Natural killer cell (primary cell): ENCODE measurements at regions of chrX and their contacts with region 1.

Region 1: DNA sequence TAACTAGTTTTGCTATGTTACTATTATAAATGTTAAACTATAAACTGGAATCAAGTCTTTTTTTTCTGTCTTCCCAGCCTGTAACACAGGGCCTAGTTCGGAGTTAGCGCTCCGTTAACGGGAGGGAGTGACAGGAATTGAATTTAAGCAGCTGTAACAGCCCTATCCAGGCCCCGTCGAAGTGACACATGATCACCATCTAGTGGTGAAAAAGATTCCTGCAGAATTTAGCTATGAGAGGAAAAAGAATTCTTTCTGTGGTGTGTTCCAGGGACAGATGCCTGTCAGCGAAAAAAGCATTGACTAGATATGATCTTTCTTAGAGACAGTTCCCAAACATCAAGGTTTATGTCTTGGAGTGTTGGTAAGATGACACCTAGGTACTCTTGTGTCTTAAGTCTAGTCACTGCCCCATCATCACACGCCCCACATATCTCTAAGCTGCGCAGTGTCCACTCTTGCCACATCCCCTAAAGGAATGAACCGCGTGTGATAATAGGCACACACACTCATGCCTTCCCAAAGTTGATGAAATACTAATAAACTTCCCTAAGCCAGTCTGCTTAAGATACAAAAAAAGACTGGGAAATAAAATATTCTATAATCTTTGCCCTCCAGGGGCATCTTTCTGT is 2.0 kb downstream of the GAB3 start:
- DNase-seq: peak in 1 of 2 donors; percentile 85
- ATAC-seq: peak; percentile 63 to 80 (median 65)
- H3K4me3 ChIP-seq: peak overlapping the region; percentile 83
- H3K4me3 Mint-ChIP-seq: peak overlapping the region; percentile 89
- H3K27ac ChIP-seq: peak overlapping the region; percentile 41
- H3K27ac Mint-ChIP-seq: peak overlapping the region; percentile 78 to 84
- H3K4me1 ChIP-seq: peaks cover 26% of the 10 kb centered on the region
- H3K4me1 Mint-ChIP-seq: peaks cover 30 to 43% of the 10 kb centered on the region in 2 donors
- H3K27me3 ChIP-seq: no peaks in the 10 kb centered on the region
- H3K27me3 Mint-ChIP-seq: peaks cover 0 to 7% of the 10 kb centered on the region in 2 donors
- CTCF ChIP-seq: peak; percentile 69

Region 2: GRCh38 chrX:154458954-154459778 is 289.7 kb before region 1 on chrX:
- intact Hi-C with region 1: no loop called
- DNase-seq: peak in 1 of 2 donors; percentile 38
- ATAC-seq: peak in 1 of 3 donors; percentile 53
- H3K4me3 ChIP-seq: peak overlapping the region; percentile 44
- H3K4me3 Mint-ChIP-seq: peak overlapping the region; percentile 79
- H3K27ac ChIP-seq: no peak overlapping the region
- H3K27ac Mint-ChIP-seq: peak overlapping the region in 1 of 2 donors; percentile 18
- H3K4me1 ChIP-seq: peaks cover 21% of the 10 kb centered on the region
- H3K4me1 Mint-ChIP-seq: peaks cover 6 to 18% of the 10 kb centered on the region in 2 donors
- H3K27me3 ChIP-seq: no peaks in the 10 kb centered on the region
- H3K27me3 Mint-ChIP-seq: peaks cover 0 to 7% of the 10 kb centered on the region in 2 donors
- CTCF ChIP-seq: no peak

Region 3: DNA sequence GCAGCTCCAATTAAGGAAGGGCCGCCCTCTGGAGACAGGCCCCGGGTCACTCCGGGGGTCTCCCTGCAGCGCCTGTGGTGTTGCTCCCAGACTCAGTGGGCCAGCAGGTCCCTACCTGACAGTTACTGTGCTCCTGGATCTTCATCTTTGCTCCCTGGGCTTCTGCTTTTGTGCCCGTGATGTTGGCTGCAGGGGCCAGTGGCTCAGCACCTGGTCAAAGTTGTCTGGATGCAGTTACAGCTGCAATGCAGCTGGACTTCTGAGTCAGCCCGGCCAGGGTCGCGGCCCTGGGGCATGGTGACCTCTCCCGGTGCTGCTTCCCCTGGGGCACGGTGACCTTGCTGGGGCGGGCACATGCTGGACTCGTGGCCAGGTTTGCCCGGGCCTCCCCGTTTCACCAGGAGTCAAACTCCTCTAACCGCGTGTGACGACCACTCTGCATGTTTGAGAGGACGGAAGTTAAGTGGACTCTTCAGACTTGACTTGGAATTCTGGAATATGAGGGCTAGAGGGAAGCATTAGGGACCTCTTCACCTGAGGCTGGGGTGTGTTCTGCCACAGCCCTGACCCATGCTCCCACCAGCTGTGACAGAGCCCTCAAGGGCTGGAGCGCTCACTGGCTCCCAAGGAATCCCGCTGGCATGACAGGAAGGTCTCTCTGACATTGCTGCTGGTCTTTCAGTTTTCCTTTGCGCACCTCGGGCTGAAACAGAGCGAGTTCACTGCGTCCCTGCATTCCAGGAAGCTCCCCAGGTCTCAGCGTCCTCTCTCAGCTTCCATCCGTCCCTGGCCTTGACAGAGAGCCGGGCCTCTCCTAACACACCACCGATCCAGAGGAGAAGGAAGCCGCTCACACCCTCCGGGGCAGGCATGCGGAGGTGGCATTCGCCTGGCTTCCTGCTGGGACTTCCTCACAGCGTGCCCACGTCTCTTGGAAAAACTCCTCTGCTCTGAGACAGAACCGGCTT is 99.0 kb before region 1 on chrX:
- intact Hi-C with region 1: no loop called
- DNase-seq: no peak
- ATAC-seq: no peak
- H3K4me3 ChIP-seq: no peak overlapping the region
- H3K4me3 Mint-ChIP-seq: no peak overlapping the region
- H3K27ac ChIP-seq: no peak overlapping the region
- H3K27ac Mint-ChIP-seq: no peak overlapping the region
- H3K4me1 ChIP-seq: no peaks in the 10 kb centered on the region
- H3K4me1 Mint-ChIP-seq: peaks cover 4 to 6% of the 10 kb centered on the region in 2 donors
- H3K27me3 ChIP-seq: no peaks in the 10 kb centered on the region
- H3K27me3 Mint-ChIP-seq: no peaks in the 10 kb centered on the region
- CTCF ChIP-seq: no peak

Region 4: GRCh38 chrX:154661170-154661569 is 87.7 kb before region 1 on chrX:
- intact Hi-C with region 1: no loop called
- DNase-seq: no peak
- ATAC-seq: no peak
- H3K4me3 ChIP-seq: no peak overlapping the region
- H3K4me3 Mint-ChIP-seq: no peak overlapping the region
- H3K27ac ChIP-seq: no peak overlapping the region
- H3K27ac Mint-ChIP-seq: no peak overlapping the region
- H3K4me1 ChIP-seq: no peaks in the 10 kb centered on the region
- H3K4me1 Mint-ChIP-seq: peaks cover 0 to 5% of the 10 kb centered on the region in 2 donors
- H3K27me3 ChIP-seq: no peaks in the 10 kb centered on the region
- H3K27me3 Mint-ChIP-seq: no peaks in the 10 kb centered on the region
- CTCF ChIP-seq: no peak

Region 5: DNA sequence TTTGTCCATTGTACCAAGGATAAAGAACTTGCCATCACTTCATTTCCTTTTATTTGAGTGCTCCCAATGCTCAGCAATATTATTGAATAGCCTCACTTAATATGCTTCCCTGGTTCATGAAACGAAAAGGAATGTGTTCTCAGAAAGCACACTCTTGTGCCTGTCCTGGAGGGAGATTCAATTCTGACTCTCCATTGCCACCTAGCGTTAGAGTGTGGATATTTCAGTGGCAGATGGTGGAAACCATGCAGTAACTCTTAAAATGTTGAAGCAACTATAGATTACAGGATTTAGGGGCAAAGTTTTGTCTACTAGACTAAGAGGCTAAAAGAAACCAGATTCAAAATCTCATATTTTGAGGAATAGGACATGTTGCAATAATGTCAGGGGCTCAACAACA is 33.9 kb before region 1 on chrX:
- intact Hi-C with region 1: loop called (anchors 5 kb)
- DNase-seq: peak in 1 of 2 donors; percentile 79
- ATAC-seq: peak; percentile 40 to 63 (median 49)
- H3K4me3 ChIP-seq: no peak overlapping the region
- H3K4me3 Mint-ChIP-seq: peak overlapping the region; percentile 17
- H3K27ac ChIP-seq: no peak overlapping the region
- H3K27ac Mint-ChIP-seq: peak overlapping the region; percentile 61 to 77
- H3K4me1 ChIP-seq: peaks cover 62% of the 10 kb centered on the region
- H3K4me1 Mint-ChIP-seq: peaks cover 63 to 68% of the 10 kb centered on the region in 2 donors
- H3K27me3 ChIP-seq: no peaks in the 10 kb centered on the region
- H3K27me3 Mint-ChIP-seq: no peaks in the 10 kb centered on the region
- CTCF ChIP-seq: peak; percentile 64

Region 6: DNA sequence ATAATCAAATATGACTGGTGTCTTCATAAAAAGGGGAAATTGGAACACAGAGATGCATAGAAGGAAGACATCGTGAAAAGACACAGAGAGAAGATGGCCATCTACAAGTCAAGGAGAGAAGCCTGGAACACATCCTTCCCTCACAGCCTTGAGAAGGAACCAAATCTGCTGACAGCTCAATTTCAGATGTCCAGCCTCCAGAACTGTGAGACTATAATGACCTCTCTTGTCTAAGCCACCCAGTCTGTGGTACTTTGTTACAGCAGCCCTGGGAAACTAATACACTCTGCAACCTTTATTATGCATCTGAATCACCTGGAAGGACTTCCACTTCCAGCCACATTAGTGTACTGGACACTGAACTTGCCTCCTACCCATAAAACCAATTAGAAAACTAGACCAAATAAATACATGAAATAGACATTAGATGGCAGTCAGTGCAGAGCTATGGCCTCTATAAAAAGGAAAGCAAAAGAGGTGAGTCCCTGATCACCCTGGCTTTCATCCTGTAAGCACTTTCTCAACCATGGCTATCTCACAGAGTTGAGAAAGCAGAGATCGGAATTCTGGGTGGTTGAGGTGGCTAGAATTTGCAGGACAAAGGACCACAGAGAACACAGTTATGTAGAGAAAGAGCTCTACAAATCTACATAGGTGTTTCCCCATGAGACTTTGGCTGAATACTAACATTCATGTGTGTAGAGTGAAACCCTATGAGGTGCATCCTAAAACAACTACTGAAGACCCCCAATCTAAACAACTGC is 23.7 kb before region 1 on chrX:
- intact Hi-C with region 1: loop called (anchors 1 kb)
- DNase-seq: peak in 1 of 2 donors; percentile 56
- ATAC-seq: peak; percentile 77 to 82 (median 81)
- H3K4me3 ChIP-seq: no peak overlapping the region
- H3K4me3 Mint-ChIP-seq: peak overlapping the region; percentile 43
- H3K27ac ChIP-seq: peak overlapping the region; percentile 72
- H3K27ac Mint-ChIP-seq: peak overlapping the region; percentile 86 to 87
- H3K4me1 ChIP-seq: peaks cover 62% of the 10 kb centered on the region
- H3K4me1 Mint-ChIP-seq: peaks cover 73 to 82% of the 10 kb centered on the region in 2 donors
- H3K27me3 ChIP-seq: no peaks in the 10 kb centered on the region
- H3K27me3 Mint-ChIP-seq: no peaks in the 10 kb centered on the region
- CTCF ChIP-seq: peak; percentile 13

Region 7: DNA sequence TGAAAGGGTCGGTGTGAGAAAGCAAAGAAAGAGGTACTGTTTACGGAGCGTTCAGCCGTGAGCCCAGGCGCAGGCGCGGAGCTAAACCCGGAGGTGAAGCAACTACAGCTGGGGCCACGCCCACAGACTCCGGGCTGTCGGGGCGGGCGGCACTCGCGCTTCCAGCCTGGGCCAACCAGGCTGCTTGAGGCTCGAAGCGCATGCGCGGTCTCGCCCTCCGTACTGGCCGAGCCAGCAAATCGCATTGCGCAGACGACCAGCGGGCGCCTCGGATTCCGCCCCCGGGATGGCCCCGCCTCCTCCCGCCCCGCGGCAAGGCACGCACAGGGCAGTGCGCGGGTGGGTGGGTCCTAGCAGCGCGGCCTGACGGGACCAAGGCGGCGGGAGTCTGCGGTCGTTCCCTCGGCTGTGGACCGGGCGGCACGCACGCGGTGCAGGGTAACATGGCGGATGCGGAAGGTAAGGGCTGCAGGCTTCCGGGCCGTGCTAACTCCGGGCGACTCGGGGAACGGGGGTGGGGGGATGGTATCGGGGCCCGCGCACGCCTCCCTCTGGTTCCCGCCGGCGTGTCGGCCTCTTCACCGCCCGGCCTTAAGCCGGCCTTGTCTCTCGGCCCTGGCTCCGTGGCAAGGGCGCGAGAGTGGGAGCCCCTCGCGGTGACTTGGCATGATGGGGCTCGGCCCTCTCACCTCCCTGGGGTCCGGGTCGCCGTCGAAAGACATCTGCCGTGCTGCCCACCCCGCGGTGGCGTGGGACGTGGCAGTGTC is 13.9 kb after region 1 on chrX and contains the start of gene DKC1:
- intact Hi-C with region 1: loop called (anchors 1 kb)
- DNase-seq: peak; percentile 87 to 97
- ATAC-seq: peak; percentile 89 to 97 (median 89)
- H3K4me3 ChIP-seq: peak within 1 kb of the TSS; percentile 66
- H3K4me3 Mint-ChIP-seq: peak within 1 kb of the TSS; percentile 87
- H3K27ac ChIP-seq: peak within 1 kb of the TSS; percentile 79
- H3K27ac Mint-ChIP-seq: peak within 1 kb of the TSS; percentile 89 to 91
- H3K4me1 ChIP-seq: peaks cover 21% of the 10 kb centered on the region
- H3K4me1 Mint-ChIP-seq: peaks cover 0 to 6% of the 10 kb centered on the region in 2 donors
- H3K27me3 ChIP-seq: no peaks in the 10 kb centered on the region
- H3K27me3 Mint-ChIP-seq: no peaks in the 10 kb centered on the region
- CTCF ChIP-seq: peak; percentile 3
- total RNA-seq, gene DKC1: 41.8 to 54.3 (median 53.9) TPM

Region 8: DNA sequence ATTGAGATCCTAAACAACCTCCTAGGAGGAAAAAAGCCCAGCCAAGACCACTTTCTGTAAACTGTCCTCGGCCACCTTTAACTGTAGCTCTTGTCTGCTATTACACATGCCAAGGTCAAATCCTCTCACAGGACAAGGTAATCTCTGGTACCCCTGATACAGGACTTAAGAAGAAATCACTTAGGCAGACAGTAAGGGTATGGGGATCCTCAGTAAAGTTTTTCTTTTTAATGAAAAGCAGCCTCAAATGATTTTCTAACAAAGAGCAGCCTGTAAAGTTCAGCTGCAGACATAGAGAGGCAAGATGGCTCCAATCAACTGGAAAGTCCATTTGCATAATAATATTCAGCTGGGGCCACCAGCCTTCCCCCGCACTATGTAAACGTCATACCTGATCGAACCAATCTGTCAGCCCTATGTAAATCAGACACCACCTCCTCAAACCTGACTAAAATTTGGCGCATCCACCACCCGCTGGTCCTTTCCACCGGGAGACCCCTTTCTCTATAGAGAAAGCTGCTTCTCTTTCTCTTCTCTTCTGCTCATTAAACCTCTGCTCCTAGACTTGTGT is 71.0 kb after region 1 on chrX:
- intact Hi-C with region 1: loop called (anchors 10 kb)
- DNase-seq: no peak
- ATAC-seq: no peak
- H3K4me3 ChIP-seq: no peak overlapping the region
- H3K4me3 Mint-ChIP-seq: no peak overlapping the region
- H3K27ac ChIP-seq: no peak overlapping the region
- H3K27ac Mint-ChIP-seq: no peak overlapping the region
- H3K4me1 ChIP-seq: no peaks in the 10 kb centered on the region
- H3K4me1 Mint-ChIP-seq: no peaks in the 10 kb centered on the region
- H3K27me3 ChIP-seq: no peaks in the 10 kb centered on the region
- H3K27me3 Mint-ChIP-seq: peaks cover 3 to 16% of the 10 kb centered on the region in 2 donors
- CTCF ChIP-seq: no peak